Heart right ventricle (tissue), 16 donors: ENCODE measurements at regions of chr14 and their contacts with region 1.

Region 1: DNA sequence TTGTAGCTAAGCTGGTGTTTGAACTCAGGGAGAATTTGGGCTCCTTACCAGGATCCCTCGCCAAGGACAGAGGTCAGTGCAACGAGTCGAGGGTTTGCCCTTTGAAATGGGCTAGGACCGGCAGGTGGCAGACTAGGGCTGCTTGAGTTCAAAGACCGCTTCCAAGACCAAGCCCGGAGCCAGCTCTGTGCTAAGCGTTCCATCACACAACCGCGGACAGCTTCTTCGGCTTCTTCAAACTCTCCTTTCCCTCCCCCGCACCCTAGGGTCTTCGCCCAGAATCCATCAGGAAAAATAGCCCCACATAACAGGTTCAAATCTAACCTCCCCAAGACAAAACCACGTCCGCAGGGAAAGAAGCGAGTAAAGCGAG is 705 bp upstream of the FLVCR2 start:
- DNase-seq: peak; percentile 81 to 89
- ATAC-seq: peak; percentile 81 to 95 (median 89)
- H3K4me3 ChIP-seq: peak overlapping the region; percentile 43 to 78 (median 62)
- H3K27ac ChIP-seq: peak overlapping the region in 9 of 10 donors; percentile 40 to 84 (median 78)
- H3K4me1 ChIP-seq: peaks cover 8 to 30% (median 20%) of the 10 kb centered on the region in 9 donors
- H3K27me3 ChIP-seq: no peaks in the 10 kb centered on the region
- CTCF ChIP-seq: peak; percentile 61 to 88 (median 82)

Region 2: DNA sequence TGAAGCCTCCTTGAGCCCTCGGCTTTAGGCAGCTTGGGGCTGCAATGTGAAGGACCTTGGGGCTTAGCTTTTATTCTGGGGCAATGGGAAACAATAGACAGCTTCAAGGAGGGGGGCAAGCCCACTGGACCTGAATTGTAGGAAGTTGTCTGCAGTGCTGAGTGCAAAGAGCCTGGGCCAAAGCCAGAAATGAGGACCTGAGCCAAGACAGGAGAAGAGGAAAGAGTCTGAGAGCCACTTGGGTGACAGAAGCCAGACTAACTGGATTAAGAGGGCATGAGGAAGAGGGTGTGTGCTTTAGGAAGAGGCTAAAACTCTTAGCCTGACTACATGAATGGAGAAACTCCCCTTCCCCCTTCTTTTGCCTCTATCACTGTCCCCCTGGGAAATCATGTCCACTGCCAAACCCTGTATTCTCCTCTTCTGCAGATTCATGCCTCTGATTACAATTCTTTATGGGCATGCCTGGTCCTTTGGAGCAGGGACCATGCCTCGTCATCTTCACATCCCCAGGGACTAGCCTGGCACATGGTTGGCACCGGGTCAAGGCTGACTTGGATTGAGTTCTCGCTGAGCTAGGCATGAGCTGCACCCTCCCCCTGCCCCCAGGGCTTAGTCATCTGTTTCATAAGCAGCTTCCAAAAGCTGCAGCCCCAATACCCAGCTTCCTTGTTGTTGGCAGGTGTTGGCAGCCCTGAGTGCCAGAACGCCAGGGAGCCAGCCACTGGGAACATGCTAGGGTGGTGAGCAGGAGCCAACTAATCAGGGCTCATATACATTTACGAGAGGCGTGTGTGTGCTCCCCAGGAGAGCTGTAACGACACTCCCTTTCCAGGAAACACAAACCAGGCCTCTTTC is 177.7 kb before region 1 on chr14:
- intact Hi-C with region 1: no loop called
- DNase-seq: peak; percentile 86 to 89
- ATAC-seq: peak; percentile 86 to 97 (median 92)
- H3K4me3 ChIP-seq: no peak overlapping the region
- H3K27ac ChIP-seq: peak overlapping the region in 9 of 10 donors; percentile 55 to 80 (median 76)
- H3K4me1 ChIP-seq: peaks cover 14 to 30% (median 28%) of the 10 kb centered on the region in 9 donors
- H3K27me3 ChIP-seq: no peaks in the 10 kb centered on the region
- CTCF ChIP-seq: no peak

Region 3: DNA sequence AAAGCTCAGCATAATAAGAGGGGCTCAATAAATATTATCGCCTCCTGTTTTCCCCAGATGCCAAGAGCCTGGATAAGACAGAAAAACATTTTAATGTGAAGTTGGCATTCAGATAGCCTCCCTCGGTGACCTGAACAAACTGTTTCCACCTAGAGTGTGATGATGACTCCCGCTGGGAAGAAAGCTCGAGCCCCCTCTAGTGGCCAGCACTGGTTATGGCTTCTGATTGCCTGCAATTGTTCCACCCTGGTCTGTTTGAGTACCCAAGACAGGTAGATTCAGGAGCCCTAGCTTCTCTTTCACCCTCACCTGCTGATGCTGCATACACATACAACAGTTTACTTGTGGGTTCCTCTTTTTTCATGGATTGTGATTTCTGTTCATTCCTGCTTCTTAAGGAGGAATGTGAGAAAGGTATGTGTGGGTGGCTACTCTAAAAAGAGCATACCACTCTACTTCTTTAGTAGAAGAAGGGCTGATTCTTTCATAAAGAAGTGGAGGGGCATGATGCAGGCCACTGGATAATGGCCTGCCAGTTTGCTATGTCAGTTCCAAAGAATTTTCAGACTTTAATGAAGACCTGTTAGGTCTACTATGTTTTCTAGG is 76.5 kb after region 1 on chr14:
- intact Hi-C with region 1: loop called (anchors 1 to 5 kb)
- DNase-seq: peak; percentile 78 to 84
- ATAC-seq: peak; percentile 81 to 91 (median 85)
- H3K4me3 ChIP-seq: no peak overlapping the region
- H3K27ac ChIP-seq: no peak overlapping the region
- H3K4me1 ChIP-seq: peaks cover 0 to 19% (median 0%) of the 10 kb centered on the region in 9 donors
- H3K27me3 ChIP-seq: no peaks in the 10 kb centered on the region
- CTCF ChIP-seq: peak; percentile 92 to 99 (median 96)

Region 4: DNA sequence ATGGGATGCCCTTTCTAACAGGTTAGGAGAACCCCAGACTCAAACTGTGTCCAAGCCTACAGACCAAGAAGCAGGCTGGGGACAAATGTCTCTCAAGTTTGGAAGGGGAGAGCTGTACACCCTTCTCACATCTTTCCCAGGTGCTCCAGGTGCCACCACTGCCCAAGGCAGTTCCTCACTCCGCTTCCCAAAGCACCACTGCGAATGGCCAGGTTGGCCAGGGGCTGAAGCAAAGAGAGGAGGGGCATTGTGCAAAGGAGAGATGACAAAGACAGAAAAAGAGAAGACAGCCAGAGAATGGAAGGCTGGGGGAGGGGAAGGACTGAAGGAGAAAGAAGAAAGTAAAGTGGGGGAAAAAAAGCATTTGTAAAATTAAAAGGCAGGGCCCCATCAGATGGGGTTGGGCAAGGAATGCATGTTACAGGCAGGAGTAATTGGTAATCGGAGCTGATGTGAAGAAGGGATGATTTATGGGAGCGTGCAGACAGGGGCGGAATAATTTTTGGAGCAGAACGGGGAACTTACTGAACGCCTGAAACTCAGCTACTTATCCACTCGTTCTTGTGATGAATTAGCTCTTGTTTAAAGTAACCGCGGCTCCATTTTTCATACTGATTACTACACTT is 964.0 kb after region 1 on chr14:
- intact Hi-C with region 1: no loop called
- DNase-seq: no peak
- ATAC-seq: no peak
- H3K4me3 ChIP-seq: no peak overlapping the region
- H3K27ac ChIP-seq: no peak overlapping the region
- H3K4me1 ChIP-seq: no peaks in the 10 kb centered on the region
- H3K27me3 ChIP-seq: no peaks in the 10 kb centered on the region
- CTCF ChIP-seq: no peak